ENCODE measurements at regions of chr1 and their contacts with region 1.

Region 1: GRCh38 chr1:40224040-40224439 is 23.7 kb upstream of the TMCO2 start:
- DNase-seq: peak; percentile 41
- H3K4me3 Mint-ChIP-seq: no peak overlapping the region
- H3K27ac Mint-ChIP-seq: no peak overlapping the region
- H3K4me1 Mint-ChIP-seq: peaks cover 25% of the 10 kb centered on the region
- H3K27me3 Mint-ChIP-seq: no peaks in the 10 kb centered on the region

Region 2: DNA sequence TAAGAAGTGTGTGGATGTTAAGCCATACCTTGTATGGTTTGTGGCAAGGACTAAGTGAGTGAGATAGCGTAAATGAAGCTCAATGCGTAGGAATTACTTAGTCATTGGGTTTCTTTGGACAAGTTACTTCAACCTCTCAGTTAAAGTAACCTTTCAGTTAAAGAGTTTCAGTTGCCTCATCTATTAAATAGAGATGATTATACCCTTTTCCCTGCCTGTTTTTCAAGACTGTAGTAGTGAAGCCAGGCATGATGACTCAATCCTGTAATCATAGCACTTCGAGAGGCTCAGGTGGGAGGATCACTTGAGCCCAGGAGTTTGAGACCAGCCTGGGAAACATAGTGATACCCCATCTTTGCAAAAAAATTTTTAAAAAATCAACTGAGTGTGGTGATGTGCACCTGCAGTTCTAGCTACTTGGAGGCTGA is 40.3 kb after region 1 on chr1:
- CTCF ChIA-PET with region 1: no interaction called
- POLR2A ChIA-PET with region 1: interaction called, 4 read pairs
- intact Hi-C with region 1: loop called (anchors 2 kb)
- DNase-seq: peak; percentile 59
- H3K4me3 Mint-ChIP-seq: peak overlapping the region; percentile 16
- H3K27ac Mint-ChIP-seq: peak overlapping the region; percentile 91
- H3K4me1 Mint-ChIP-seq: peaks cover 63% of the 10 kb centered on the region
- H3K27me3 Mint-ChIP-seq: no peaks in the 10 kb centered on the region

Measured in activated CD4-positive, alpha-beta memory T cell treated with anti-CD3 and anti-CD28 coated beads for 36 hours (primary cell).